GM10248 (cell line): ENCODE measurements at regions of chr19 and their contacts with region 1.

Region 1: DNA sequence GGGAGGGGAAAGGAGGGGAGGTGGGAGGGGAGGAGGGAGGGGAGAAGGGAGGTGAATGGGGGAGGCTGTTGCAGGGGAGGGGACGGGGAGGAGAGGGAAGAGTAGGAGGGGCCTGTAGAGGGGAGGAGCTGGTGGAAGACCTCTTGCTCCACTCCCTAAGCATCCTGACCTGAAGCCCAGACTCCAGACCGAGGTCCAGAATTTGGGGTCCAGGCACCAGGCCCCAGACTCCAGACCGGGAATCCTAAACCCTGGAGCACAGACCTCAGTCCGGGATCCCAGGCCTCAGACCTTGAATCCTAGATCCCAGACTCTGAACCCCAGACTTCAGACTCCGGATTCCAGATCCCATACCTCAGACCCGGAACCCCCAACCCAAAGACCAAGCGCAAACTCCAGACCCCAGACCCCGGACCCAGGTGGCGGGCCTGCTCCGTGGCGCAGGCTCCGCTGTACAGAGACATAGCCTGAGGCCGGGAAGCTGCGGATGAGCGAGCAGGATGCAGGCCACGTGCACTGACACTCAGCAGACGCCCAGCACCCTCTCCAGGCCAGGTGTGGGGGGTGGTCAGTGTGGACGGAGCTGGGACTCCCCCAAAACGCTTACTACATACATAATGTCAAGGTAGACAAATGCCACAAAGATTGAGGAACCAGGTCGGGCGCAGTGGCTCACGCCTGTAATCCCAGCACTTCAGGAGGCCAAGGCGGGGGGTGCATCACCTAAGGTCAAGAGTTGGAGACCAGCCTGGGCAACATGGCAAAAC is 710 bp upstream of the BTBD2 start:
- DNase-seq: peak; percentile 91
- CTCF ChIP-seq: no peak

Region 2: GRCh38 chr19:2041683-2042484 is 25.7 kb after region 1 on chr19:
- CTCF ChIA-PET with region 1: interaction called, 14 read pairs
- POLR2A ChIA-PET with region 1: no interaction called
- DNase-seq: peak; percentile 99
- CTCF ChIP-seq: no peak

Region 3: DNA sequence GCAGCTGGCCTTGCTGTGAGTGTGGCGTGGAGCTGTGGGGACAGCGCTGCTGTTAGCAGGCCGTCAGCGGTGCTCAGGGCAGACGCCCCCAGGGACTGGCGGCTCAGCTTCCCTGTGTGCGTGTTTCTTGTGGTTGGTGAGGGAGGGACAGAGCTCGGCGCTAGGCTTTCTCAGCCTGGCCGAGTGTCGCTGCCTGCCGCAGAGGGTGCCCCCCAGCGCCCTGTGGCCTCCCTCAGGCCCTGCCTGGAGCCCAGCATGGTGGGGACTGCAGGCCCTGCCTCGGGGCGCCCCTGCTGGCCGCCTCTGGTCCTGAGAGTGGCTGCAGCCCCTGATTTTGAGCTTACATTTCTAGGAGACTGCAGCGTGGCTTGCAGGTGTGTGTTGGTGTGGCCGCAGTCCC is 183.0 kb after region 1 on chr19:
- CTCF ChIA-PET with region 1: no interaction called
- POLR2A ChIA-PET with region 1: no interaction called
- DNase-seq: no peak
- CTCF ChIP-seq: peak; percentile 32